Colonic mucosa (tissue), 4 donors: ENCODE measurements at regions of chr11 and their contacts with region 1.

Region 1: DNA sequence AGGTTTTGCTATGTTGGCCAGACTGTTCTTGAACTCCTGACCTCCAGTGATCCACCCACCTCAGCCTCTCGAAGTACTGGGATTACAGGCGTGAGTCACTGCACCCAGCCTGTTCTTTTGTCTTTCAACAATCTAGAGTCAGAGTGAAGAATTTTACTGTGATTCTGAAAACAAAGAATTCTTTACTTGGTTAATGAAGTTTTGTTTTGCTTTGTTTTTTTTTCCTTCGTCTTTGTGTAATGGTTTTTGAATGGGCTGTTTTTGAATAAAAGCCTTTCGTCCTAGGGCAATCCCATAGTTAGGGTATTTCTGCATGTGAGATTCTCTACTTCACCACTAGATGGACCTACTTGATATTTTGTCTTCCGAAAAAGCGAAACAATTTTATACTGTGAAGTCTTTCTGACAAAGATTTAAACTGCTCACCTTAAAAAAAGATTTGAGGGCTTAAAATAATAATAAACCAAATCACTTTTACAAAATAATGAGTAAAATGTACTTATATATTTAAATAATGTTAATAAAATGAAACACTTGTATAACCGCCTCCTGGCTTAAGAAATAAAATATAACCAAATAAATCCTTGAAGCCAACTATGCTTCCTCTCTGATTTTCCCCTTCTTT is 43.4 kb upstream of the SC5D start:
- DNase-seq: no peak
- H3K4me3 ChIP-seq: no peak overlapping the region
- H3K27ac ChIP-seq: no peak overlapping the region
- H3K4me1 ChIP-seq: no peaks in the 10 kb centered on the region
- H3K27me3 ChIP-seq: no peaks in the 10 kb centered on the region
- CTCF ChIP-seq: peak; percentile 73

Region 2: DNA sequence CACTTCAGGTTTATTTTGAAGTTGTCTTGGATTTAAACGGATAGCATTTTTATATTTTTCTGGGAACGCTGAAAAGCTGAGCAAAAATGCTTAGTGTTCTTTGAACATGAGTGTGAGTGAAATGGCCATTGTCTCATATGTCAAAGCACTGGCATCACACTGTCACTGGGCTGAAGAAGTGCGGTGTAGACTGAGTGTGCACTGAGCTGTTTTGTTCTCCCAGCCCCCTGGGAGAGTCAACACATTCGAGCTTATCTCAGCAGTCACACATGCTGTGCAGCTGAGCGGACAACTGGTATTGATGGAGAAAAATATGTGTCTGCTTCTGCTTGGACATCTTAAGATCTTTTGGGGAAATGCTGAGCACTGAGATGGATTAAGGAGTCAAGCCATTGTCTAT is 57.3 kb before region 1 on chr11:
- intact Hi-C with region 1: no loop called
- DNase-seq: no peak
- H3K4me3 ChIP-seq: no peak overlapping the region
- H3K27ac ChIP-seq: no peak overlapping the region
- H3K4me1 ChIP-seq: no peaks in the 10 kb centered on the region
- H3K27me3 ChIP-seq: peaks cover 6% of the 10 kb centered on the region
- CTCF ChIP-seq: no peak

Region 3: DNA sequence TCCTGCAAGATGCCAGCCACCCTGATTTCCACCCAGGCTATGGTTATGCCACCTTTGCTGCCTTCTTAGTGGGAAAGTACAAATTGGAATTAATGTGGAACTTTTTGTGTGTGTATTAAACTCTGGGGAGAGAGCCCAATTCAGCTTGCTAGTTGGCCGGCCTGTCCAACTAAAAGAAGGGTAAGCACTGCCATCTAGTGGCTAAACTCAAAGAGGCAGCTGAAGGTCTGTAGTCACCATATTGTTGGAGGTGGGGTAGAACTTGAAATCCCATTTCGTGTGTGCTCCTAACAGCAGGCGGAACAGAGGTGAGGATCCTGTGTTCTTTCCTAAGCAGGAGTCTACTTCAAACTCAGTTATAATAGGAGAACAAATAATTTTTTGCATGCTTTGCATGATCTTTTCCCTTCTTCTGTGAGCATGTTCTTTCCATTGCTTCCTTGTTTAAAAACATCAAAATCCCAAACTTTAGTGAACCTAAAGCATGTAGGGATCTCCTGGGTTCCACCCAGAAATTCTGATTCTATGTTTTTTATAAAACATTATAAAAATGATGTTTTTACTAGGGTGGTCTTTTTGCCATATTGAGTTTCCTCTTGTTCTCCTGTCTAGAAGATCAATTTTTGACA is 342.4 kb after region 1 on chr11:
- intact Hi-C with region 1: loop called (anchors 5 kb)
- DNase-seq: peak; percentile 81
- H3K4me3 ChIP-seq: no peak overlapping the region
- H3K27ac ChIP-seq: no peak overlapping the region
- H3K4me1 ChIP-seq: no peaks in the 10 kb centered on the region
- H3K27me3 ChIP-seq: no peaks in the 10 kb centered on the region
- CTCF ChIP-seq: peak; percentile 78